Activated CD4-positive, alpha-beta memory T cell treated with anti-CD3 and anti-CD28 coated beads for 36 hours (primary cell): ENCODE measurements at regions of chr3 and their contacts with region 1.

Region 1: GRCh38 chr3:137105277-137105977 is 147.6 kb downstream of the IL20RB start:
- DNase-seq: no peak
- H3K4me3 Mint-ChIP-seq: no peak overlapping the region
- H3K27ac Mint-ChIP-seq: no peak overlapping the region
- H3K4me1 Mint-ChIP-seq: no peaks in the 10 kb centered on the region
- H3K27me3 Mint-ChIP-seq: peaks cover 9% of the 10 kb centered on the region

Region 2: GRCh38 chr3:137032465-137033120 is 72.8 kb before region 1 on chr3:
- CTCF ChIA-PET with region 1: interaction called, 4 read pairs
- POLR2A ChIA-PET with region 1: no interaction called
- intact Hi-C with region 1: loop called (anchors 1 kb)
- DNase-seq: peak; percentile 86
- H3K4me3 Mint-ChIP-seq: peak overlapping the region; percentile 19
- H3K27ac Mint-ChIP-seq: no peak overlapping the region
- H3K4me1 Mint-ChIP-seq: peaks cover 8% of the 10 kb centered on the region
- H3K27me3 Mint-ChIP-seq: peaks cover 22% of the 10 kb centered on the region

Region 3: DNA sequence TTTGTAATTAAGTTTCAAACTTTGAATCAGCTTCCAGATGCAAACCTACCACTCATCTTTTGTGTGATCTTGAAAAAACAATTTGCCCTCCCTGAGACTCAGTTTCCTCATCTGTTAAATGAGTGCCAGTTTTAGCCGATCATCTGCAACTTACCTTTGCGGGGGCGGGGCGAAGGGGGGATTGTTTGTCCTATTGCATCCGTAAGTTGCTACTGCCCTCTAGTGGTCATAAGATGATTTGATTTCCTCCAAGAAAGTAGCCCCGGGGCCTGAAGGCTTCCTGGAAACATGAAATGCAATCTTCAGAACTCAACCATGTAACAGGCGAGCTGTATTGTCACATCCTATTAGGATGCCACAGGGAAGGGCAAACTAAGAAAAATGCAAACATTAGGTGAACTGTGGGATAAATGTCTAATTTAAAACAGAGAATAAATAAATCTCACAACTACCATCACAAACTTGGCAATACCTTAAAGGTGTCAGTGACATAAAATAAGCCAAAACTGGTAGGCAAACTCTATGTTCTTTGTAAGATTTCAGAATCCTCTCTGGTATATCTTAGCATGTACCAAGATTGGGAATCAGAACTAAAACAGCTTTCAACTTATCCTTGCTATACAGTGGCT is 841.0 kb after region 1 on chr3:
- CTCF ChIA-PET with region 1: interaction called, 19 read pairs
- POLR2A ChIA-PET with region 1: no interaction called
- intact Hi-C with region 1: loop called (anchors 1 kb)
- DNase-seq: peak; percentile 57
- H3K4me3 Mint-ChIP-seq: no peak overlapping the region
- H3K27ac Mint-ChIP-seq: no peak overlapping the region
- H3K4me1 Mint-ChIP-seq: no peaks in the 10 kb centered on the region
- H3K27me3 Mint-ChIP-seq: no peaks in the 10 kb centered on the region

Region 4: DNA sequence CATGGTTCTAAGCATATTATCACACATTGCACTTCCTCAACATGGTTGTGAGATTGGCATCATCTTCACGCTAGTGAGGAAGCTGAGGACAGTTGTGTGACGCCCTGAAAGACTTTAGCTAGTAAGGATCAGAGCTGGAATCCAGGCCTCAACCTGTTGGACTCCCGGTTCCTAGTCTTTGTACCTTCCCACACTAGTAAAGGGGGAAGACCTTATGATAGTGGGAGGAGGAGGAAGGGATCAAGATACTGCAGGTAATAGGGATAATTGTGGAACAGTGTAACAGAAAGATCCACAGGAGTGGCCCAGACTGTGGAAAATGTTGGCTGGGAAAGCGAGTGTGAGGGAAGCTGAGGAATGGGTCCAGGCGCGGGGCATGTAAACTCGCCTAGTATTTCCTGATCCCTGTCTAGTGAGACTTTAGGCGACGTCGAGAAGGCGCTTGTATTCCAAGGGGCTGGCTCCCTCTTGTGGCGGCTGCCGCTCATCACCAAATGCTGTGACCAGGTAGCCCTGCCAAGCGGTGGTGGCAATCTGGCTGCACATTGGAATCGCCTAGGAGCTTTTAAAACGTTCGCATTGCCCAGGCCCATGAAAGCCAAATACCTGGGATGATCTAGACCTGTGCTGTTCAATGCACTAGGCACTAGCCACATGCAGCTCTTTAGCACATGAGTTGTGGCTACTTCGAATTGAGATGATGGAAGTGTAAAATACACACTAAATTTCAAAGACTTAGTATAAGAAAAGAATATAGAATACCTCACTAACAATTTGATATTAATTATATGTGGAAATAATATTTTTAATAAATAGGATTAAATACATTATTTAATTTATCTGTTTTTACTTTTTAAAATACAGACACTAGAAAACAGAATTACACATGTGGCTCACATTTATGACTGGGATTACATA is 865.7 kb after region 1 on chr3:
- CTCF ChIA-PET with region 1: interaction called, 4 read pairs
- POLR2A ChIA-PET with region 1: no interaction called
- intact Hi-C with region 1: loop called (anchors 1 kb)
- DNase-seq: peak; percentile 75
- H3K4me3 Mint-ChIP-seq: no peak overlapping the region
- H3K27ac Mint-ChIP-seq: no peak overlapping the region
- H3K4me1 Mint-ChIP-seq: no peaks in the 10 kb centered on the region
- H3K27me3 Mint-ChIP-seq: peaks cover 12% of the 10 kb centered on the region

Region 5: GRCh38 chr3:138051946-138052802 is 946.7 kb after region 1 on chr3:
- CTCF ChIA-PET with region 1: interaction called, 6 read pairs
- POLR2A ChIA-PET with region 1: no interaction called
- intact Hi-C with region 1: loop called (anchors 5 kb)
- DNase-seq: peak; percentile 47
- H3K4me3 Mint-ChIP-seq: no peak overlapping the region
- H3K27ac Mint-ChIP-seq: no peak overlapping the region
- H3K4me1 Mint-ChIP-seq: no peaks in the 10 kb centered on the region
- H3K27me3 Mint-ChIP-seq: peaks cover 14% of the 10 kb centered on the region